BJ (cell line): ENCODE measurements at regions of chr6 and their contacts with region 1.

Region 1: DNA sequence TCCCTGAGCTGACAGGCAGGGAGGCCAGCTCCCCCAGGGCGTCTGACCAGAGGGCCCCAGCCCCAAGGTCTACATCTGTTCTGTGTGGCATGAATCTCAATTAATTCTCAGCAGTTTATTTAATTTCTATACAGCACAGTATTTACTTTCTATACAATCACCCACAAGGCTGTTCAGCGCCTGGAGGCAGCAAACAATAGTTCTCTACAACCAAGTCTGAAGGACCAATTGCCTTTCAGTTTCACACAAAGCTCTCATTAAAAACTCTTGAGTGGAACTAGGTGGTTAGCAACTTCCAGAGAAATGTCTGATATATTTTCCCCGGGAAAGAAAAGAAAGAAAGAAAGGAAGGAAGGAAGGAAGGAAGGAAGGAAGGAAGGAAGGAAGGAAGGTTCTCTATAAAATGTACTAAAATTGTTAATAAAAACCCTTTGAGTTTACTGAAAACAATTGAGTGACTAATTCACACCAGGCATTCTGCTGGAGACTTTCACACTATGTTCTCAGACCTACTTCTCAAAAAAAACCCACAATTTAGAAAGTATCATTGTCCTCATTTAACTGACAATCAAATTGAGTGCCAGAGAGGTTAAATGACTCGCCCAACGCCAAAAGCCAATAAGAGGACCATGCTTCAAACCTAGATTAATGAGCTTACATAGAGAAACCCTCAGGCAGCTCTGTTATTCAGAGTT is 62.6 kb downstream of the METTL24 start:
- DNase-seq: no peak
- H3K4me3 ChIP-seq: no peak overlapping the region
- H3K27me3 ChIP-seq: no peaks in the 10 kb centered on the region
- CTCF ChIP-seq: no peak

Region 2: GRCh38 chr6:110201151-110201884 is 94.3 kb before region 1 on chr6:
- CTCF ChIA-PET with region 1: no interaction called
- POLR2A ChIA-PET with region 1: interaction called, 11 read pairs
- DNase-seq: no peak
- H3K4me3 ChIP-seq: no peak overlapping the region
- H3K27me3 ChIP-seq: no peaks in the 10 kb centered on the region
- CTCF ChIP-seq: no peak